Activated CD4-positive, alpha-beta T cell treated with anti-CD3 and anti-CD28 coated beads, Interleukin-2, amount 10 ng/mL, durations not matched to agents 7 days and 5 days (primary cell): ENCODE measurements at regions of chr6 and their contacts with region 1.

Region 1: DNA sequence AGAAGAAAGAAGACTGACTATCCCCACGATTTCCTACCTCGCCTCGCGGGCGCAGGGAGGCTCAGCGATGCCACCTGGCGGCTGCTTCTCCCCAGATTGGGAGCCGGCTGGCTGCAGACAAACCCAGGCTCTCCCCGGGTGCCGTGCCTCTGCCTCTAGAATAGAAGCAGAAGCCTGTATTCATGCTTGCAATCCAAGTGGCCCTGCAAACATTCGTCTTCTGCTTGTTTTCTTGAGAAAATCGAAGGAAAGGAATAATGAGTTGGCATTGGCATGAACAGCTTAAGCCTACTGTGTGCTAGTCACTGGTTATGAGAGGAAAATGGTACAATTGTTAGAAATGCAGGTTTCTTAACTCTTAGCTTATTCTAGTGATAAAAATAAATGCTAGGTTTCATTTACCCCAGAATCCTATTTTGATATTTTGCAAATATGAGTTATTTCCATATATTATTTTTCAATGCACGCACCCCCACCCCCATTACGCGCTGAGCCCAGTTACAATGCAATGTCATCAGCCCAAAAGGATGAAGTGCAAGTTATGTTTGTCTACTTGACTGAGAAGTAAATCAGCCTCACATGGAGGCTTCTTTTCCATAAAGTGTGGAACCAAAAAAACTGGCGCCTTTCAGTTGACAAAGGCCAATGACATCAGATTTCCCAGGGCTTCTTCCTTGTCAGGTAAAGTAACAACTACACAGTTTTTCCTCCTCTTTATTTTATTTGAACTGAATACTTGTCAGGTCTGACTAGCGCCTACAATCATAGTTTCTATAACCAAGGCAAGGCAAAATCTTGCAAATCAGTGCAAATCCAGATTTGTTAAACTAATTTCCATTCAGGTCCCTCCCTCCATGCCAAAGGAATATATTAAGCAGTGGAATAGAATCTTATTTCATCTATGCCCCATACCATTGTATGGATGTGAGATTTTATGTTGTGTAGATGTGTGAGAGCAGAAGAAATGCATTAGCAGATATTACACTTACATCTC is 3.9 kb upstream of the SOX4 start:
- DNase-seq: peak; percentile 83
- H3K4me3 Mint-ChIP-seq: peak overlapping the region; percentile 88
- H3K27ac Mint-ChIP-seq: peak overlapping the region; percentile 88
- H3K4me1 Mint-ChIP-seq: peaks cover 19% of the 10 kb centered on the region
- H3K27me3 Mint-ChIP-seq: peaks cover 41% of the 10 kb centered on the region

Region 2: GRCh38 chr6:20564269-20564668 is 1025.4 kb before region 1 on chr6:
- CTCF ChIA-PET with region 1: interaction called, 19 read pairs
- POLR2A ChIA-PET with region 1: interaction called, 8 read pairs
- DNase-seq: no peak
- H3K4me3 Mint-ChIP-seq: no peak overlapping the region
- H3K27ac Mint-ChIP-seq: no peak overlapping the region
- H3K4me1 Mint-ChIP-seq: peaks cover 14% of the 10 kb centered on the region
- H3K27me3 Mint-ChIP-seq: no peaks in the 10 kb centered on the region

Region 3: DNA sequence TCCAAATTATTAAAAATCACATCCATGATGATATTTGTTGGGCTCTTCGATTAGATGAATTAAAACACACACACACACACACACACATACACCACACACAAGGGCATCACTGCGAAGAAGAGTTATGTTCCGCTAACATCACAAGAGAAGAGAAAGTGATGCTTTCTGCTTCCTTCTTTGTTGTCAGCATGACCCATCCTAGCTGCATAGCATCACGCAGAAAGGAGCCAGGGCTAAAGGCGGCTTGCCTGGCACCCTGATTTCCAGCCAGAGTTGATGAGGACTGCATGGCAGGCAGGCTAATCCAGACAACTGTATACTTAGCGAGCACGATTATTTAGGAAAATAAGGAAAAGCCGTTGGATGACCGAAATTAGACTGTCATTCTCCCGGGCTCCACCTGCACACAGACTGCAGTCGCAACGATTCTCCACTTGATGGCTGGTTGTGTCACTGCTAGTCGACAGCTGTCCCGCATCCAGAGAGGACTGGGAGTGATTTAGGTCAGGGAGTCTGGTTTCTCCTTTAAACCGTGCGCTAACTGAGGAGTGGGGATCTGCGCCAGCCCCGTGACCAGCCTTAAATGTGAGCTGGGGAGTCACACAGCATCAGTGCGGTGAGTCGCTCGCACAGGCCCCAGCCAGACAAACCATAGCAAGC is 66.7 kb before region 1 on chr6:
- CTCF ChIA-PET with region 1: no interaction called
- POLR2A ChIA-PET with region 1: no interaction called
- DNase-seq: no peak
- H3K4me3 Mint-ChIP-seq: no peak overlapping the region
- H3K27ac Mint-ChIP-seq: no peak overlapping the region
- H3K4me1 Mint-ChIP-seq: no peaks in the 10 kb centered on the region
- H3K27me3 Mint-ChIP-seq: peaks cover 3% of the 10 kb centered on the region

Region 4: GRCh38 chr6:21615504-21615903 is 25.9 kb after region 1 on chr6:
- CTCF ChIA-PET with region 1: no interaction called
- POLR2A ChIA-PET with region 1: no interaction called
- DNase-seq: no peak
- H3K4me3 Mint-ChIP-seq: no peak overlapping the region
- H3K27ac Mint-ChIP-seq: no peak overlapping the region
- H3K4me1 Mint-ChIP-seq: no peaks in the 10 kb centered on the region
- H3K27me3 Mint-ChIP-seq: peaks cover 6% of the 10 kb centered on the region